Colonic mucosa (tissue), 4 donors: ENCODE measurements at regions of chr10 and their contacts with region 1.

Region 1: GRCh38 chr10:132387764-132388210 is 9.2 kb upstream of the PWWP2B start:
- DNase-seq: peak; percentile 82
- H3K4me3 ChIP-seq: no peak overlapping the region
- H3K27ac ChIP-seq: no peak overlapping the region
- H3K4me1 ChIP-seq: no peaks in the 10 kb centered on the region
- H3K27me3 ChIP-seq: no peaks in the 10 kb centered on the region
- CTCF ChIP-seq: peak; percentile 31

Region 2: GRCh38 chr10:132434405-132435005 is 46.7 kb after region 1 on chr10:
- intact Hi-C with region 1: no loop called
- DNase-seq: peak; percentile 59
- H3K4me3 ChIP-seq: no peak overlapping the region
- H3K27ac ChIP-seq: no peak overlapping the region
- H3K4me1 ChIP-seq: peaks cover 5% of the 10 kb centered on the region
- H3K27me3 ChIP-seq: no peaks in the 10 kb centered on the region
- CTCF ChIP-seq: no peak

Region 3: DNA sequence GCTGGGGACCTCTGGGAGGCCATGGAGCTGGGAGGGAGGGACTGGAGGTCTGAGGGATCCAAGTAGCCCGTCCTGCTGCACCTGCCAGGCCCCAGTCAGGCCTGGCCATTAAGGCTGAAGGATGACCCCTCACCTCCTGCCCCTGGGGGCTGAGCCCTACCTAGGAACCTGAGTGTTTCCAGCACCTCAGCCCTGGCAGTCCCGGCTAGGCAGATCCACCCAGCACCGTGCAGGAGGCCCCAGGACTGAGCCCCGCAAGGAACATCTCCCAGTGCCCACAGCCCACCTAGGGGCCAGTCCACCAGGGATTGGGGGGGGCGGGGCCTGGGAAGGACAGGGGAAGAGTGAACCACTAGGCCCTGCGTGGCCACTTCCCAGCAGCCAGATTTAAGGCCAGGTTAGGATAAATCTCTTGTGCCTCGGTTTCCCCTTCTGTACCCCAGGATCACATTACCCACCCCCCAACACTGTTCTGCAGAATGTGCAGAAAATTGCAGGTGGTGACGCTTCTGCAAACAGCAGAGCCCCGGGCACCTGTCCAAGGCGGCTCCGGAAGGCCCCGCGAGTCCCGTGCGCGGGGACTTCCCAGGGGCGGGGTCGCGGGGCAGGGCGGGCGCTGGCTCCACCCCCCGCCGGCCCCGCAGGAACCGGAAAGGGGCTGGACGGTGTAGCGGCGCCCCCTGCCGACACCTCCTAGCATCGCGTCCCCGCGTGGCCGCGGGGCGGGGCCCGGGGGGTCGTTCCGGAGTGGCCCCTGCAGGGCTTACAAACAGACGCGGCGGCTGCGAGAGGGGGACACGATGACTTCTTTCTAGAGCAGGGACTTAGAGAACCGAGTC is 65.1 kb after region 1 on chr10:
- intact Hi-C with region 1: loop called (anchors 2 kb)
- DNase-seq: peak; percentile 94
- H3K4me3 ChIP-seq: no peak overlapping the region
- H3K27ac ChIP-seq: peak overlapping the region; percentile 30
- H3K4me1 ChIP-seq: peaks cover 25% of the 10 kb centered on the region
- H3K27me3 ChIP-seq: no peaks in the 10 kb centered on the region
- CTCF ChIP-seq: peak; percentile 99

Region 4: DNA sequence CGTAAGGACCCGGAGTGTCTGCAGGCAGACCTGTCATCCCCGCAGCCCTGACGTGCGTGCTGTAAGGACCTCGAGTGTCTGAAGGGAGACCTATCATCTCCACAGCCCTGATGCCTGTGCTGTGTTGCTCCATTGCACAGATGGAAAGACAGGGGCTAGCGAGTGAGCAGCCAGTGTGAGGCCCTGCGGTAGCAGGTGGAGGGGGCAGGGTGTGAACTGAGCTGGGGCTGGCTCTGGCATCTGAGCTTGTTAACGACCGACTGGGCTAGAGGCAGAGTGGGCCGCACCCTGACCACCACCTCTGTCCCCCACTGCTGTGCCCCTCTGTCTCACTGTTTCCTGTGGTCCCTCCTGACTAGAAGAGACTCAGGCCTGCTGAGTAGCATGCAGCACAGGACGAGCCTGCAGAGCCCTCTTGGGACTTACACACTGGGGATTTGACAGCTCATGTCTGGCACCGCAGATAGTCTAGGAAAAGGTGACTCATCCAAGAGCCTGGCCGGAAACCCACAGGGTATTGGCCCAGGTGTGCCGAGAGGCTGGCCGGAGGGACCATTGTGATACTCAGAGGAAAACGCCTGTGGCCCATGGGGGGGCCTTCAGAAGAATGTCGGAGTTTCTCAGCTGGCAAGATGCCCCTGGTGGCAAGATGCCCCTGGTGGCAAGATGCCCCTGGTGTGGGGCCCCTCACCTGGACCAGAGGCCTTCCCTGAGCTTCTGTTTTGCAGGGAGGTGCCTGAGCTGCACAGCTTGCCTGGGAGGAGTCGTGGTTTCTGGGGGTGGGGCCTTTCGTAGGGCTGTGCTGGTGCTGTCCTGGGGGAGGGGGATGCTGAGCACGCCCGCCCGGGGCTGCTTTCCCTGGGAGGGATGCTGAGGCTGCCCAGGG is 184.1 kb after region 1 on chr10:
- intact Hi-C with region 1: loop called (anchors 10 kb)
- DNase-seq: peak; percentile 42
- H3K4me3 ChIP-seq: no peak overlapping the region
- H3K27ac ChIP-seq: no peak overlapping the region
- H3K4me1 ChIP-seq: peaks cover 29% of the 10 kb centered on the region
- H3K27me3 ChIP-seq: no peaks in the 10 kb centered on the region
- CTCF ChIP-seq: no peak